CD4-positive, alpha-beta T cell (primary cell): ENCODE measurements at regions of chr2 and their contacts with region 1.

Region 1: GRCh38 chr2:26330113-26330549 is 15.8 kb upstream of the SELENOI start:
- DNase-seq: peak; percentile 70 to 86 (median 80)
- ATAC-seq: peak; percentile 99
- H3K4me3 ChIP-seq: no peak overlapping the region
- H3K4me3 Mint-ChIP-seq: no peak overlapping the region
- H3K27ac ChIP-seq: no peak overlapping the region
- H3K27ac Mint-ChIP-seq: no peak overlapping the region
- H3K4me1 ChIP-seq: peaks cover 6% of the 10 kb centered on the region
- H3K4me1 Mint-ChIP-seq: peaks cover 11% of the 10 kb centered on the region
- H3K27me3 ChIP-seq: no peaks in the 10 kb centered on the region
- H3K27me3 Mint-ChIP-seq: no peaks in the 10 kb centered on the region
- CTCF ChIP-seq: peak; percentile 95

Region 2: GRCh38 chr2:25951071-25951547 is 379.0 kb before region 1 on chr2:
- CTCF ChIA-PET with region 1: no interaction called
- POLR2A ChIA-PET with region 1: no interaction called
- intact Hi-C with region 1: loop called (anchors 1 to 5 kb)
- DNase-seq: peak; percentile 53 to 87 (median 62)
- ATAC-seq: peak; percentile 90
- H3K4me3 ChIP-seq: no peak overlapping the region
- H3K4me3 Mint-ChIP-seq: no peak overlapping the region
- H3K27ac ChIP-seq: no peak overlapping the region
- H3K27ac Mint-ChIP-seq: no peak overlapping the region
- H3K4me1 ChIP-seq: no peaks in the 10 kb centered on the region
- H3K4me1 Mint-ChIP-seq: no peaks in the 10 kb centered on the region
- H3K27me3 ChIP-seq: no peaks in the 10 kb centered on the region
- H3K27me3 Mint-ChIP-seq: no peaks in the 10 kb centered on the region
- CTCF ChIP-seq: peak; percentile 95

Region 3: GRCh38 chr2:26088032-26088643 is 242.0 kb before region 1 on chr2:
- CTCF ChIA-PET with region 1: no interaction called
- POLR2A ChIA-PET with region 1: no interaction called
- intact Hi-C with region 1: loop called (anchors 1 to 2 kb)
- DNase-seq: peak in 5 of 14 experiments; percentile 9 to 61 (median 47)
- ATAC-seq: peak; percentile 86
- H3K4me3 ChIP-seq: no peak overlapping the region
- H3K4me3 Mint-ChIP-seq: no peak overlapping the region
- H3K27ac ChIP-seq: no peak overlapping the region
- H3K27ac Mint-ChIP-seq: no peak overlapping the region
- H3K4me1 ChIP-seq: peaks cover 4% of the 10 kb centered on the region
- H3K4me1 Mint-ChIP-seq: peaks cover 48% of the 10 kb centered on the region
- H3K27me3 ChIP-seq: no peaks in the 10 kb centered on the region
- H3K27me3 Mint-ChIP-seq: no peaks in the 10 kb centered on the region
- CTCF ChIP-seq: peak; percentile 77

Region 4: DNA sequence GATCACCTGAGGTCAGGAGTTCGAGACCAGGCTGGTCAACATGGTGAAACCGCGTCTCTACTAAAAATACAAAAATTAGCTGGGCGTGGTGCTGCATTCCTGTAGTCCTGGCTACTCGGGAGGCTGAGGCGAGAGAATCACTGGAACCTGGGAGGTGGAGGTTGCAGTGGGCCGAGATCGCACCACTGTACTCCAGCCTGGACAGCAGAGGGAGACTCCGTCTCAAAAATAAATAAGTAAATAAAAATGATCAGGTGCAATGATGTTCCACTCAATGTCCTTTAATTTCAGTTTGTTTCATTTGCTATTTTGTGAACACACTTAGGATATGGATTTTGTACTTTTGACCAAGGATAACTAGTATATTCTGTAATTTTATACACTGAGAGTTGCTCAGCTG is 95.0 kb before region 1 on chr2:
- CTCF ChIA-PET with region 1: no interaction called
- POLR2A ChIA-PET with region 1: no interaction called
- intact Hi-C with region 1: loop called (anchors 2 to 5 kb)
- DNase-seq: peak in 2 of 14 experiments; percentile 25 to 32
- ATAC-seq: no peak
- H3K4me3 ChIP-seq: no peak overlapping the region
- H3K4me3 Mint-ChIP-seq: no peak overlapping the region
- H3K27ac ChIP-seq: no peak overlapping the region
- H3K27ac Mint-ChIP-seq: no peak overlapping the region
- H3K4me1 ChIP-seq: no peaks in the 10 kb centered on the region
- H3K4me1 Mint-ChIP-seq: peaks cover 7% of the 10 kb centered on the region
- H3K27me3 ChIP-seq: no peaks in the 10 kb centered on the region
- H3K27me3 Mint-ChIP-seq: no peaks in the 10 kb centered on the region
- CTCF ChIP-seq: peak; percentile 37

Region 5: GRCh38 chr2:26292665-26293064 is 37.5 kb before region 1 on chr2:
- CTCF ChIA-PET with region 1: no interaction called
- POLR2A ChIA-PET with region 1: no interaction called
- intact Hi-C with region 1: loop called in 1 of 2 experiments (anchors 5 kb)
- DNase-seq: no peak
- ATAC-seq: no peak
- H3K4me3 ChIP-seq: no peak overlapping the region
- H3K4me3 Mint-ChIP-seq: no peak overlapping the region
- H3K27ac ChIP-seq: no peak overlapping the region
- H3K27ac Mint-ChIP-seq: no peak overlapping the region
- H3K4me1 ChIP-seq: no peaks in the 10 kb centered on the region
- H3K4me1 Mint-ChIP-seq: no peaks in the 10 kb centered on the region
- H3K27me3 ChIP-seq: no peaks in the 10 kb centered on the region
- H3K27me3 Mint-ChIP-seq: no peaks in the 10 kb centered on the region
- CTCF ChIP-seq: no peak

Region 6: DNA sequence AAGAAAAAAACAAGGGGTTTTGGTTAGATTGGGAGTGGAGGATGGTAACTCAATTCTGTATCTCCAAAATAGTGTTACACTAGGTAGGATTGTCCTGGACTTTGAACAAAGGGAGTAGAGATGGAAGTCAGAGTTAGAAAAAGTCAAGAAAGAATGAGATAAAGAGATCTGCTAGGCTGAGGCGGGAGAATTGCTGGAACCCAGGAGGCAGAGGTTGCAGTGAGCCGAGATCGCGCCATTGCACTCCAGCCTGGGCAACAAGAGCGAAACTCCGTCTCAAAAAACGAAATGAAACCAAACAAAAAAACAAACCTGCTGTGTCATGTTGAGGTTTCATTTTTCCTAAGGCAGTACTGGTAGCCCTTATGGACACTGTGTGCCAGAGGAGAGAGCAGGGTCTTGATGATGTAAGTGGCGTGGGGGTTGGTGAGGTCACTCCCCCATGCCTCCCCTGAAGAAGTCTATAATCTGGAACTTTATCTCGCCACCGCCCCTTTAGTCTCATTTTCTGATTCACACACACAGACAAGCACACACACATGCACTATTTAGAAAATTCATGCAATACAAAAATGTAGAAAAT is 82.1 kb after region 1 on chr2:
- CTCF ChIA-PET with region 1: no interaction called
- POLR2A ChIA-PET with region 1: no interaction called
- intact Hi-C with region 1: no loop called
- DNase-seq: peak in 3 of 14 experiments; percentile 5 to 17 (median 12)
- ATAC-seq: no peak
- H3K4me3 ChIP-seq: peak overlapping the region; percentile 24
- H3K4me3 Mint-ChIP-seq: peak overlapping the region; percentile 2
- H3K27ac ChIP-seq: no peak overlapping the region
- H3K27ac Mint-ChIP-seq: no peak overlapping the region
- H3K4me1 ChIP-seq: no peaks in the 10 kb centered on the region
- H3K4me1 Mint-ChIP-seq: peaks cover 10% of the 10 kb centered on the region
- H3K27me3 ChIP-seq: peaks cover 0 to 7% of the 10 kb centered on the region in 2 experiments
- H3K27me3 Mint-ChIP-seq: peaks cover 11% of the 10 kb centered on the region
- CTCF ChIP-seq: no peak

Region 7: DNA sequence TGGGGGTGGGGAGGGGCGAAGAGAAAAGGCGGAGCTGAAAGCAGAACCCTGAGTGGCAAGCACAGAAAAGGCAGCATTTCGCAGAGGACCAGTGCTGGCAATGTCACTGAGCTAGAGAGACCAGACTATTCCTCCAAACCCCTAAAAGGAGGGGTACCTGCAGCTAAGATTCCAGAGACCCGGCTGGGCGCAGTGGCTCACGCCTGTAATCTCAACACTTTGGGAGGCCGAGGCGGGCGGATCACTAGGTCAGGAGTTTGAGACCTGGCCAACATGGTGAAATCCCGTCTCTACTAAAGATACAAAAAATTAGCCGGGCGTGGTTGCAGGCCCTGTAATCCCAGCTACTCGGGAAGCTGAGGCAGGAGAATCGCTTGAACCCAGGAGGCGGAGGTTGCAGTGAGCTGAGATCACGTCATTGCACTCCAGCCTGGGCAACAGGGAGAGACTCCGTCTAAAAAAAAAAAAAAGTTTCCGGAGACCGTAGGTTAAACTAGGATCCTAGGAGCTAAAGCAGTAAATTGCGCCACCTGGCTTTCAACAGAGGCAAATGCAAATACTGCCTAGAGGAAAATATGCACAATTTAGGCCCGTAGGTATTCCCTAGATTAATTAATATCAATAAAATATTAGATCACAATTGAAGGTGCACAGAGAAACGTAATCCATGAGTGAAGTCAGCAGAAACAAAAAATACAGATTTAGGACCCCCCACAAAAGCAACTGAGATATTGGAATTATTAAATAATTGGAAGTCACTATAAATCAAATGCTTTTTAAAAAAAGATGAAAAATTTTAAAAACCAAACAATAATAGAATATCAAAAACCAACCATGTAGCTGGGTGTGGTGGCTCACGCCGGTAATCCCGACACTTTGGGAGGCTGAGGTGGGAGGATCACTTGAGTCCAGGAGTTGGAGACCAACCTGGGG is 973.2 kb after region 1 on chr2:
- CTCF ChIA-PET with region 1: no interaction called
- POLR2A ChIA-PET with region 1: no interaction called
- intact Hi-C with region 1: no loop called
- DNase-seq: peak in 6 of 14 experiments; percentile 7 to 75 (median 65)
- ATAC-seq: peak; percentile 76
- H3K4me3 ChIP-seq: peak overlapping the region; percentile 39
- H3K4me3 Mint-ChIP-seq: peak overlapping the region; percentile 84
- H3K27ac ChIP-seq: no peak overlapping the region
- H3K27ac Mint-ChIP-seq: peak overlapping the region; percentile 45
- H3K4me1 ChIP-seq: peaks cover 20% of the 10 kb centered on the region
- H3K4me1 Mint-ChIP-seq: peaks cover 10% of the 10 kb centered on the region
- H3K27me3 ChIP-seq: peaks cover 23 to 26% of the 10 kb centered on the region in 2 experiments
- H3K27me3 Mint-ChIP-seq: peaks cover 44% of the 10 kb centered on the region
- CTCF ChIP-seq: peak; percentile 97